ENCODE measurements at regions of chr19 and their contacts with region 1.

Region 1: GRCh38 chr19:34171877-34172660 is at the start of gene LSM14A:
- DNase-seq: peak; percentile 90
- H3K4me3 Mint-ChIP-seq: peak within 1 kb of the TSS; percentile 100
- H3K27ac Mint-ChIP-seq: peak within 1 kb of the TSS; percentile 100
- H3K4me1 Mint-ChIP-seq: peaks cover 39% of the 10 kb centered on the region
- H3K27me3 Mint-ChIP-seq: peaks cover 5% of the 10 kb centered on the region
- total RNA-seq, gene LSM14A: 118 and 121 TPM in 2 replicates

Region 2: DNA sequence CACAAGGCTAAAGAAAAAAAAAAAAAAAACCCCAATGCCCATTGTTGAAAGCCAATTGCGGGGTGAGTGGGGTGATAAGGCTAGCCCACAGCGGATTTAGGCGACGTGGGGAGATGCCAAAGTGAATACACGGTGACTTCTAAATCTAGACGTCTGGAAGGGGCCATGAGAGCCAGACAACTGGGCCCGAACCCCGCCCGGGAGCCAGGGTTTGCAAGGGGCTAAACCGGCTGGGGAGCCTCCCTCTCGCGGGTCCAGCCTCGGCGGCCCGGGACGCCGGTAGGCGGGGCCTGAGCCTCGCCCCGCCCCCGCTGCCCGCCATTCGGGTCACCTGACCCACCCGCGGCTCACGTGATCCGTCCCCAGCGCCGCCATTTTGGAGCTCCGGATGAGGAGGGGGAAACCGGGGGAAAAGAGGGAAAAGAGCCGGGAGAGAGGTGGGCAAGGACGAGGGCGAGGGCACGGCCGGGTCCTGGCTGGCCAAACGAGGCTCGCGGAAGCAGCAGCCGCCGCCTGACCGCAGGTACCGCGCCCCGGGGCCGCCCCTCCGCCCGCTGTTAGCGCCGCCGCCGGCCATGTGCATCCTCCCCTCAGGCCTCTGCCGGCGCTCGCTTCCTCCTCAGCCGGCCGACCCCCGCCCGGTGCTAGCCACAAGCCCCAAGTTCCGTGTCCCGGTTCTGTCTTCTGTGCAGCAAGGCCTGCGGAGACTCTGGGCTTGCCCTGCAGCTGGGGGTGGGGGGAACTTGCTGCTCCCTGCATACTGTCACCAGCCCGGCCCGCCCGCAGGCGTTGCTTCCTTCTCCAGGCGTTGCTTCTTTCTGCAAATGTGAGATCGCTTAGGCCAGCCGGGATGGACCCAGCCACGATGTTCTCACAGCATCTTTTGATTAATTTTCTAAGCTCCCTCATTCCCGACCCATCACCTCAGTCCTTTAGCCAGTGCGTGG is 1826.5 kb before region 1 on chr19 and contains the start of gene ZNF507:
- intact Hi-C with region 1: loop called (anchors 10 kb)
- DNase-seq: peak; percentile 82
- H3K4me3 Mint-ChIP-seq: peak within 1 kb of the TSS; percentile 96
- H3K27ac Mint-ChIP-seq: peak within 1 kb of the TSS; percentile 96
- H3K4me1 Mint-ChIP-seq: peaks cover 40% of the 10 kb centered on the region
- H3K27me3 Mint-ChIP-seq: peaks cover 7% of the 10 kb centered on the region
- total RNA-seq, gene ZNF507: 32.4 and 34.8 TPM in 2 replicates

Region 3: DNA sequence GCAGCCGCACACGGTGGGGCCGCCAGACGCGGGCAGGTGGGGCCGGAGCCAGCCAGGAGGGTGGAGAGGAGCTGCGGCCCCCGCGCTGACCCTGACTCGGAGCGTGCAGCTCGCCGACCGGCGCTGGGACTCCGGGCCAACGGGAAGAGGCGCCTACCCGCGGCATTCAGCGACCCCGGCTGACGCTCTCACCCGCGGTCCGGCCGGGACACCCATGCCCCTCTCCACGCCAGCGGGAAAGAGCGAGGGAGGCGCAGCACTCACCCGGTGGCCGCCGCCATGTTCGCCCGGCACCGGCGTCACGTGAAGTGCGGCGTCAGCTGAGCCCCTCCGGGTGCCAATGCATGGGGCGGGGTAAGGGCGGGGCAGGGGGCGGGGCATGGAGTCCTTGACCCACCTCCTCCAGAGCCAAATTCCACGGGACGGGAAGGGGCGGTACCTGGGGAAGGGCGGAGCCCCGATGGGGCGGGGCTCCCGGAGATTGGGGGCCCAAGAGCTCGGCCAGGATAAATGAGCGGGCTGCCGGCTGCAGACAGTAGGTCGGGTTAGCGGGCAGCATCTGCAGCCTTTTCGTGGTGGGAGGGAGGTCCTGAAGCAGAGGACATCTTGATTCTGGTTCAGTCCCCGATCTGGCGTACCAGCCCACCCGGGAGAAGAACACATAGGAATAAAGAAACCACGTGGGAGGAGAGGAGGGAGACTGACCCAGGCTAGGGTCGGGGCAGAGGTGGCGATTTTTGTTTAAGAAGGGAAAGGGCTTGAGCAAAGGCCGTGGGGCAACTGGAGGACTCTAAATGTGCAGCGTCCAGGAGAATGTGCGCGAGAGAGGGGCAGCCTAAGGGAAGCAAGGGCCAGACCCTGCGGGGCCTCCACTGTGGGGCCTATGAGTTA is 650.3 kb before region 1 on chr19 and contains the start of gene PEPD:
- intact Hi-C with region 1: loop called (anchors 5 kb)
- DNase-seq: peak; percentile 66
- H3K4me3 Mint-ChIP-seq: peak within 1 kb of the TSS; percentile 88
- H3K27ac Mint-ChIP-seq: peak within 1 kb of the TSS; percentile 16
- H3K4me1 Mint-ChIP-seq: peaks cover 16% of the 10 kb centered on the region
- H3K27me3 Mint-ChIP-seq: no peaks in the 10 kb centered on the region
- total RNA-seq, gene PEPD: 14.0 and 15.0 TPM in 2 replicates

Region 4: DNA sequence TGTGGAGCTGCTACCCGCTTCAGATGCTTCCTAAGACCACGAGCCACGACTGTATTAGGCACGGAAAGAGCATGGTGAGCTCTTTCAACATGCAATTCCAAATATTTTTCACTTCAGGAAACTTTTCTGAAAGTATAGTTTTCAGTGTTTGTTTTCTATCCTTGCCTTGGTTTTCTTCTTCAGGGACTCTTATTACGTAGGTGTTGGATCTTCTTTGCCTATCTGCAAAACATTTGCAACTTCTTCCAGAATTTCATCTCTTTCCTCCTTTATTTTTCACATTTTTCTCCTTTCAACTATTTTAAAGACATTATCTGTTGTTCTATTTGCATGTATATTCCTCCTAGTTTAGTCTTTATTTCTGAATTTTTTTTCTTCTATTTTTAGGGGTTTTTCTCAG is 148.7 kb before region 1 on chr19:
- intact Hi-C with region 1: no loop called
- DNase-seq: no peak
- H3K4me3 Mint-ChIP-seq: no peak overlapping the region
- H3K27ac Mint-ChIP-seq: no peak overlapping the region
- H3K4me1 Mint-ChIP-seq: no peaks in the 10 kb centered on the region
- H3K27me3 Mint-ChIP-seq: no peaks in the 10 kb centered on the region

Region 5: DNA sequence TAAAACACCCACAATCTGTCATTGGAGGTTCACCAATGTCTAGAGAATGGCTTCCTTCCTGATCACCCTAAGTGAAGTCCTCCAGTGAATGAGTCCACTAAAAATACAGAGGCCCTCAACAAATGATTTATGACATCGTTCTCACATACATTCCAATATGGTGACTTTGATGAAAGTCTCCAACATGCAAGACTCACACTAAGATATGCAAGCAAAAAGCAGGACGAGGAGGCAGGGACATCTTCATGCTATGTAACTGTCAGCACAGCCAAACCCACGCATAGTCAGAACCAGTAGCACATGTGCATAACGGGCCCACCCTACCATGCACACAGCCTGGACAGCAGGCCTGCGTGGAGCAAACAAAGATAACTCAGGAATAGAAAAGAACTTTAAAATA is 16.4 kb before region 1 on chr19:
- intact Hi-C with region 1: no loop called
- DNase-seq: no peak
- H3K4me3 Mint-ChIP-seq: no peak overlapping the region
- H3K27ac Mint-ChIP-seq: no peak overlapping the region
- H3K4me1 Mint-ChIP-seq: no peaks in the 10 kb centered on the region
- H3K27me3 Mint-ChIP-seq: peaks cover 5% of the 10 kb centered on the region

Region 6: DNA sequence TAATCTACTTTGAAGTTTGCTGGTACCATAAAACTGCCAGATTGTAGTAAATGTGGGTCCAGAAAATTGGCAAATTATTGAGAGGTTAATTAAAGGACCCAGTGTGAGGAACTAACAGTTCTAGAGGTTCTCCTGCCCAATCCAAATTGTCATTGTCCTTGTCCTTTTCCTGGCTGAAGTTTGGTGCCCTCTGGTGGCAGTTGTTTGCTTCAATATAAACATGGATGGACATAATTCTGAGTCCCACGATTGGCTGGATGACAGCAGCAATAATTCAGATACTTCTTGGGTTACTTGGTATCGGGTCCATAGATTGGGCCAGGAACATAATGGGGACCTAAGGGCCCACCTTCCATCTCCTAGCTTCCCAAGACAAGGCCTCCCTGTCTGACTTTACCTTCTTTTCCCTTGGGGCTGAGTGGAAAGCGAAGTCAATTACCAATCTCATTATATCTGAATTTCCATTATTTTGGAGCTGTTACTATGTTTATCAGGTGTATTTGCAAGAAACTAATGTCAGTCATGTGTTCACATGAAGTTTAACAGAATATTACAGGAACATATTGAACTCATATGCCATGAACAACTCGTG is 48.5 kb after region 1 on chr19:
- intact Hi-C with region 1: loop called (anchors 1 kb)
- DNase-seq: peak; percentile 38
- H3K4me3 Mint-ChIP-seq: no peak overlapping the region
- H3K27ac Mint-ChIP-seq: no peak overlapping the region
- H3K4me1 Mint-ChIP-seq: peaks cover 48% of the 10 kb centered on the region
- H3K27me3 Mint-ChIP-seq: no peaks in the 10 kb centered on the region

Region 7: GRCh38 chr19:34269968-34270621 is 98.0 kb after region 1 on chr19:
- intact Hi-C with region 1: loop called (anchors 1 kb)
- DNase-seq: peak; percentile 51
- H3K4me3 Mint-ChIP-seq: peak overlapping the region; percentile 60
- H3K27ac Mint-ChIP-seq: peak overlapping the region; percentile 76
- H3K4me1 Mint-ChIP-seq: peaks cover 22% of the 10 kb centered on the region
- H3K27me3 Mint-ChIP-seq: peaks cover 4% of the 10 kb centered on the region

Region 8: DNA sequence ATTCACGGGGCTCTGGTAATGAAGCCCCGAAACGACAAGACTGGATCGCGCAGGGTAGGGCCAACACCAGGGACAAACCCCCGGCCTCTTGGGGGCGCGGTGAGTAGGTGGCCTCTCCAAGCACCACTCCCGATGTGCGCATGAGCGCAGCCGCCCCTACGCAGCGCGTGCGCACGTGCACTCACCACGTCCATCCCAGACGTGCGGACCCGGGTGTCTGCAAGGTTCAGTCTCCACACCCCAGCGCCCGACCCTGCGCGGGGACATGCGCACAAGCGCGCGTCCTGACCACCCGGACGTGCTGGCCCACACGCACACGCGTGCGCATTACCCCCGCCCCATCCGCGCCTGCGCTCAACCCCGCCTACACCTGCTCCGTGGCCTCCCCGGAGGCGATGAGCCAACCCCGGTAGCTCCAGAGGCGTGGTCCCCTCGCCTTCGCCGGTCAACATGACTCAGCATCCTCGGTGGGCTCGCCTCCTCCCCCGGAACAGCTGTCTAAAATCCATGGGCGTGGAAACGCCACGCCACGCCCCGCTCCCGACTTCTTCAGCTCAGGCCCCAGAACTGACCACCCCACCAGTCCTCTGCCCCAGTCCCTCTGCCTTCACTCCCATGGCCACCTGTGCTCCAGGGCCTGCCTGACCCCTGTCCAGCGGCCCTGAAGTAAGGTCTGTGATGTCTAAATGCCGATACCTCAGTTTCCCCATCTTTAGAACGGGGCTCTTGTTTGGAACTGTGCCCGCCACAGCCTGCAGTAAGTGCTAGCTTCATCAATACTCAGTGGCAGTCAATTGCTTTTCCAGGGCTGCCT is 187.3 kb after region 1 on chr19:
- intact Hi-C with region 1: loop called (anchors 2 kb)
- DNase-seq: peak; percentile 96
- H3K4me3 Mint-ChIP-seq: peak overlapping the region; percentile 84
- H3K27ac Mint-ChIP-seq: peak overlapping the region; percentile 97
- H3K4me1 Mint-ChIP-seq: peaks cover 45% of the 10 kb centered on the region
- H3K27me3 Mint-ChIP-seq: no peaks in the 10 kb centered on the region

Region 9: DNA sequence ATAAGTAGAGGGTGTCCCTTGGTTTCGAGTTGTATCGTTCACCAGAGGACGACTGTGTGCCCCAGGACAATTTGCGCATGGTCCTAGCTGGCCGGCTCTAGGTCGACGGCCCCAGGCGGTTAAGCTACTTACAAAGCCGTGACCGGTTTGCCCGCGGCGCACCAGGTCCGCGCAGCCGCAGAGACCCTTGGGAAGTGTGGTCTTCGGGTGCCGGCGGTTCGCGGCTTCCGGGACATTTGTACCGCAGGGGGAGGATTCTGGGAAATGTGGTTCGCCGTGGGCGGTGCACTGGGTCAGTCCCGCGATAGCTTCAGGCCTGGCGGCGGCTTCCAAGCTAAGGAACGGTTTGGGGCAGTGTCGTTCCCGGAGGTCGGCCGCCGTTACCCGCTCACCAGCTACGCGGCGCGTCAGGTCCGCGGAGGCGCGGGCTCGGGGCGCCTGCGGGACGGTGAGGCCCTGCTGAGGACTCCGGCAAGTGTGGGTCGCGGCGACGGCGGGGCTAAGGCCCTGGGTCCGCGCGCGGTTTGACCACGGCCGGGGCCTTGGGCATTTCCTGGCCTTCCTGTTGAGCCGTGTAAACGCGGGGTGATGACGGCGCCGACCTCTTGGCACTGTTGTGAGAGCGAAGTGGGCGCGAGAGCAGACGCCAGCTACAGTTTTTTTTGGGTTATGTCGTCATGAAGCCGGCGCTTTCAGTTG is 505.5 kb after region 1 on chr19 and contains the start of gene ZNF302:
- intact Hi-C with region 1: loop called (anchors 5 kb)
- DNase-seq: peak; percentile 91
- H3K4me3 Mint-ChIP-seq: peak within 1 kb of the TSS; percentile 94
- H3K27ac Mint-ChIP-seq: peak within 1 kb of the TSS; percentile 99
- H3K4me1 Mint-ChIP-seq: peaks cover 30% of the 10 kb centered on the region
- H3K27me3 Mint-ChIP-seq: peaks cover 4% of the 10 kb centered on the region
- total RNA-seq, gene ZNF302: 14.8 and 16.5 TPM in 2 replicates

Region 10: GRCh38 chr19:34744896-34745690 is 573.0 kb after region 1 on chr19:
- intact Hi-C with region 1: no loop called
- DNase-seq: no peak
- H3K4me3 Mint-ChIP-seq: no peak overlapping the region
- H3K27ac Mint-ChIP-seq: no peak overlapping the region
- H3K4me1 Mint-ChIP-seq: no peaks in the 10 kb centered on the region
- H3K27me3 Mint-ChIP-seq: no peaks in the 10 kb centered on the region